ENCODE measurements at regions of chr16 and their contacts with region 1.

Region 1: GRCh38 chr16:67816240-67817031 is 9.7 kb downstream of the TSNAXIP1 start:
- DNase-seq: peak; percentile 94
- H3K4me3 ChIP-seq: no peak overlapping the region; a peak in 1 of 4 replicates
- H3K27ac ChIP-seq: no peak overlapping the region
- H3K4me1 ChIP-seq: no peaks in the 10 kb centered on the region; a peak in 1 of 4 replicates
- H3K27me3 ChIP-seq: no peaks in the 10 kb centered on the region
- CTCF ChIP-seq: peak; percentile 99
- EP300 ChIP-seq: no peak
- RAD21 ChIP-seq: peak; percentile 75

Region 2: GRCh38 chr16:67719048-67719777 is 97.2 kb before region 1 on chr16 and contains the start of gene GFOD2:
- CTCF ChIA-PET with region 1: interaction called, 12 read pairs
- POLR2A ChIA-PET with region 1: no interaction called
- DNase-seq: peak; percentile 100
- H3K4me3 ChIP-seq: peak within 1 kb of the TSS; percentile 74 to 90
- H3K27ac ChIP-seq: peak within 1 kb of the TSS; percentile 77 to 85
- H3K4me1 ChIP-seq: peaks cover 5 to 18% of the 10 kb centered on the region in 2 experiments; a peak in 3 of 4 replicates
- H3K27me3 ChIP-seq: no peaks in the 10 kb centered on the region
- CTCF ChIP-seq: no peak
- EP300 ChIP-seq: no peak
- RAD21 ChIP-seq: no peak
- polyA plus RNA-seq, gene GFOD2: 19.0 and 19.3 TPM in 2 replicates

Region 3: GRCh38 chr16:67833418-67834241 is 17.2 kb after region 1 on chr16:
- CTCF ChIA-PET with region 1: interaction called, 77 read pairs
- POLR2A ChIA-PET with region 1: interaction called, 4 read pairs
- DNase-seq: peak; percentile 98
- H3K4me3 ChIP-seq: peak overlapping the region; percentile 76 to 84
- H3K27ac ChIP-seq: peak overlapping the region; percentile 51 to 58
- H3K4me1 ChIP-seq: peaks cover 0 to 9% of the 10 kb centered on the region in 2 experiments; a peak in 1 of 4 replicates
- H3K27me3 ChIP-seq: no peaks in the 10 kb centered on the region
- CTCF ChIP-seq: no peak
- EP300 ChIP-seq: no peak
- RAD21 ChIP-seq: no peak

Region 4: GRCh38 chr16:67865316-67865715 is 48.9 kb after region 1 on chr16:
- CTCF ChIA-PET with region 1: interaction called, 26 read pairs
- POLR2A ChIA-PET with region 1: no interaction called
- DNase-seq: peak; percentile 64
- H3K4me3 ChIP-seq: no peak overlapping the region
- H3K27ac ChIP-seq: no peak overlapping the region
- H3K4me1 ChIP-seq: peaks cover 2 to 8% of the 10 kb centered on the region in 2 experiments; a peak in 2 of 4 replicates
- H3K27me3 ChIP-seq: no peaks in the 10 kb centered on the region
- CTCF ChIP-seq: peak; percentile 55
- EP300 ChIP-seq: no peak
- RAD21 ChIP-seq: peak; percentile 61

Region 5: DNA sequence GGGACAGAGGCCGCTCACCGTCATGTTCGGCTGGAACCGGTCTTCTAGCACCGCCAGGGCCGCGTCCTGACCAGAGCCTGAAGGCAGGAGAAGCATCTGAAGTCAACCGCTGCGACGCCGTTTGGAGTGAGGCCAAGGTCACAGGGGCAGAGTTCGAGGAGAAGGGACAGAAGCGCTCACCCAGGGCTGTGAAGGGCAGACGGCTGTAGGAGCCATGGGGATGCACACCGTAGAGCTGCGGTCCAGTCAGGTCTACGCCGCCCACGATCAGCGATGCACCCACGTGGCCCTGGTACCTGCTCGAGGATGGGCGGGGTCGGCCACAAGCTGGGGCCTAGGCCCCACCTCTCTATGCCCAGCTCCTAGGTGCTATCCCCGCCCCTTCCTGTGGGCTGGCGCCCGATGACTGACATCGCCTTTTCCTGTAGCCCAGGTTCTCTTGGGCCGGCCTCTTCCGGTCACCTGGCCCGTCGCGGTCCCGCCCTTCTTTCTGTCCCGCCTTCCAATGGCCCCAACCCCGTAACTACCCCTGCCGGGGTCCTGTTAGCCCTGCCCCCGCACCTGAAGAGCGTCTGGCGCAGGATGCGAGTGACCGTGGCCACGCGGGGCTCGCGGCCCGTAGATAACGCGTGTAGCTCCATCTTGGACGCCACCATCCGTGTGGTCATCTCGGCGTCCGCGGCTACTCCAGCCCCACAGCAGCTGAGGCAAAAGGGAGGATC is 119.1 kb after region 1 on chr16:
- CTCF ChIA-PET with region 1: interaction called, 33 read pairs
- POLR2A ChIA-PET with region 1: no interaction called
- DNase-seq: peak; percentile 98
- H3K4me3 ChIP-seq: peak overlapping the region; percentile 84 to 89
- H3K27ac ChIP-seq: peak overlapping the region; percentile 79 to 85
- H3K4me1 ChIP-seq: peaks cover 11 to 28% of the 10 kb centered on the region in 2 experiments; a peak in 2 of 4 replicates
- H3K27me3 ChIP-seq: no peaks in the 10 kb centered on the region
- CTCF ChIP-seq: no peak
- EP300 ChIP-seq: no peak
- RAD21 ChIP-seq: no peak

Measured in SK-N-SH (cell line).